Naive thymus-derived CD8-positive, alpha-beta T cell (primary cell): ENCODE measurements at regions of chr11 and their contacts with region 1.

Region 1: DNA sequence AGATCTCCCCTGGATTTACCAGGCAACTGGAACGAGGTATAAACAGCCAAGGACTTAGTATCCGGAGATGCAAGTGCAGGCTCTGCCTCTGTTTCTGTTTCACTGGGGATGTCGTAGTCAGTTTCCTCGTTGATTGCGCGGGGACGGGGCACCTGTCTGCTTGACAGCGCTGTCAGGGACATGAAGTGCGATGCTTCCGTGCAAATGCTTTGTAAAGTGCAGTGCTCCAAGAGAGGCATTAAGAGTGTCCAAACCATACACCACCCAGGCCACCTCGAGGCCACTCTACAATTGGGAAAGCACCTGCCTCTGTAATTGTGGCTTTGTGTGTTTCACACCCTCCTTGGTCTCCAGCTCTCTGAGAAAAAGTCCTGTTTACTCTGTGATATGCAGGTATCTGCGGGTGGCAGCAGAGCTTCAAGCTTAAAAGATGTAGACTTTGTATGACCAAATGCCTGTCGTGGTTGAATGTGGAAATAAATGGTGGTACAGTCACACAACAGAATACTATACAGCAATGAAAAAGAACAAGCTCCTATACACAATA is 18.6 kb upstream of the CD5 start:
- DNase-seq: peak in 6 of 10 donors; percentile 50 to 82 (median 66)
- ATAC-seq: peak; percentile 53 to 69
- H3K4me3 Mint-ChIP-seq: peak overlapping the region; percentile 70 to 91 (median 80)
- H3K27ac Mint-ChIP-seq: peak overlapping the region; percentile 90 to 99 (median 96)
- H3K4me1 Mint-ChIP-seq: peaks cover 34 to 53% (median 51%) of the 10 kb centered on the region in 4 donors
- H3K27me3 Mint-ChIP-seq: no peaks in the 10 kb centered on the region

Region 2: GRCh38 chr11:60841797-60842667 is 241.6 kb before region 1 on chr11 and contains the start of gene CCDC86:
- POLR2A ChIA-PET with region 1: no interaction called
- DNase-seq: peak; percentile 95 to 100 (median 99)
- ATAC-seq: peak; percentile 94 to 95
- H3K4me3 Mint-ChIP-seq: peak within 1 kb of the TSS; percentile 71 to 94 (median 90)
- H3K27ac Mint-ChIP-seq: peak within 1 kb of the TSS; percentile 92 to 99 (median 97)
- H3K4me1 Mint-ChIP-seq: peaks cover 32 to 54% (median 45%) of the 10 kb centered on the region in 4 donors
- H3K27me3 Mint-ChIP-seq: peaks cover 0 to 3% (median 0%) of the 10 kb centered on the region in 5 donors
- polyA plus RNA-seq, gene CCDC86: 10.8 to 27.1 (median 18.5) TPM

Region 3: GRCh38 chr11:60985991-60986915 is 97.4 kb before region 1 on chr11:
- POLR2A ChIA-PET with region 1: interaction called, 15 read pairs
- DNase-seq: peak; percentile 76 to 98 (median 95)
- ATAC-seq: peak; percentile 87 to 91
- H3K4me3 Mint-ChIP-seq: peak overlapping the region; percentile 54 to 85 (median 76)
- H3K27ac Mint-ChIP-seq: peak overlapping the region; percentile 93 to 100 (median 99)
- H3K4me1 Mint-ChIP-seq: peaks cover 44 to 93% (median 90%) of the 10 kb centered on the region in 4 donors
- H3K27me3 Mint-ChIP-seq: no peaks in the 10 kb centered on the region

Region 4: DNA sequence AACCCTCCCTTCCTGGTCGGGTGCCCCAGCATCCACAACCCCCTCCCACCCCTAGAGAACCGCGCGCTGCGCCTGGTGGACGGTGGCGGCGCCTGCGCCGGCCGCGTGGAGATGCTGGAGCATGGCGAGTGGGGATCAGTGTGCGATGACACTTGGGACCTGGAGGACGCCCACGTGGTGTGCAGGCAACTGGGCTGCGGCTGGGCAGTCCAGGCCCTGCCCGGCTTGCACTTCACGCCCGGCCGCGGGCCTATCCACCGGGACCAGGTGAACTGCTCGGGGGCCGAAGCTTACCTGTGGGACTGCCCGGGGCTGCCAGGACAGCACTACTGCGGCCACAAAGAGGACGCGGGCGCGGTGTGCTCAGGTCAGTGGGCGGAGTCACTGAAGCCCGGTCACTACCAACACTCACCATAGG is 75.2 kb before region 1 on chr11:
- POLR2A ChIA-PET with region 1: no interaction called
- DNase-seq: no peak
- ATAC-seq: no peak
- H3K4me3 Mint-ChIP-seq: peak overlapping the region in 4 of 10 donors; percentile 66 to 80 (median 70)
- H3K27ac Mint-ChIP-seq: peak overlapping the region in 7 of 10 donors; percentile 29 to 89 (median 81)
- H3K4me1 Mint-ChIP-seq: peaks cover 40 to 87% (median 81%) of the 10 kb centered on the region in 4 donors
- H3K27me3 Mint-ChIP-seq: no peaks in the 10 kb centered on the region

Region 5: GRCh38 chr11:61028272-61028761 is 55.4 kb before region 1 on chr11:
- POLR2A ChIA-PET with region 1: interaction called, 61 read pairs
- DNase-seq: peak; percentile 44 to 84 (median 57)
- ATAC-seq: peak; percentile 7 to 31
- H3K4me3 Mint-ChIP-seq: peak overlapping the region; percentile 78 to 98 (median 86)
- H3K27ac Mint-ChIP-seq: peak overlapping the region; percentile 95 to 99 (median 98)
- H3K4me1 Mint-ChIP-seq: peaks cover 41 to 90% (median 80%) of the 10 kb centered on the region in 4 donors
- H3K27me3 Mint-ChIP-seq: no peaks in the 10 kb centered on the region

Region 6: GRCh38 chr11:61071208-61071681 is 12.4 kb before region 1 on chr11:
- POLR2A ChIA-PET with region 1: interaction called, 70 read pairs
- DNase-seq: peak in 8 of 10 donors; percentile 45 to 81 (median 69)
- ATAC-seq: peak; percentile 97 to 99
- H3K4me3 Mint-ChIP-seq: peak overlapping the region; percentile 64 to 87 (median 78)
- H3K27ac Mint-ChIP-seq: peak overlapping the region; percentile 90 to 98 (median 96)
- H3K4me1 Mint-ChIP-seq: peaks cover 38 to 88% (median 85%) of the 10 kb centered on the region in 4 donors
- H3K27me3 Mint-ChIP-seq: no peaks in the 10 kb centered on the region

Region 7: GRCh38 chr11:61111786-61112517 is 28.3 kb after region 1 on chr11:
- POLR2A ChIA-PET with region 1: interaction called, 54 read pairs
- DNase-seq: peak in 8 of 10 donors; percentile 43 to 76 (median 65)
- ATAC-seq: peak; percentile 74 to 88
- H3K4me3 Mint-ChIP-seq: peak overlapping the region; percentile 70 to 94 (median 85)
- H3K27ac Mint-ChIP-seq: peak overlapping the region in 9 of 10 donors; percentile 89 to 97 (median 94)
- H3K4me1 Mint-ChIP-seq: peaks cover 57 to 100% (median 94%) of the 10 kb centered on the region in 4 donors
- H3K27me3 Mint-ChIP-seq: no peaks in the 10 kb centered on the region

Region 8: GRCh38 chr11:61129639-61130523 is 46.2 kb after region 1 on chr11:
- POLR2A ChIA-PET with region 1: interaction called, 31 read pairs
- DNase-seq: peak; percentile 80 to 93 (median 89)
- ATAC-seq: peak; percentile 87 to 90
- H3K4me3 Mint-ChIP-seq: peak overlapping the region; percentile 0 to 75 (median 61)
- H3K27ac Mint-ChIP-seq: peak overlapping the region; percentile 36 to 93 (median 84)
- H3K4me1 Mint-ChIP-seq: peaks cover 11 to 34% (median 26%) of the 10 kb centered on the region in 4 donors
- H3K27me3 Mint-ChIP-seq: no peaks in the 10 kb centered on the region